Posterior cingulate gyrus (tissue), 11 donors: ENCODE measurements at regions of chr1 and their contacts with region 1.

Region 1: GRCh38 chr1:222643938-222644635 is 26.2 kb downstream of the MIA3 start:
- DNase-seq: peak; percentile 90 to 99 (median 95)

Region 2: DNA sequence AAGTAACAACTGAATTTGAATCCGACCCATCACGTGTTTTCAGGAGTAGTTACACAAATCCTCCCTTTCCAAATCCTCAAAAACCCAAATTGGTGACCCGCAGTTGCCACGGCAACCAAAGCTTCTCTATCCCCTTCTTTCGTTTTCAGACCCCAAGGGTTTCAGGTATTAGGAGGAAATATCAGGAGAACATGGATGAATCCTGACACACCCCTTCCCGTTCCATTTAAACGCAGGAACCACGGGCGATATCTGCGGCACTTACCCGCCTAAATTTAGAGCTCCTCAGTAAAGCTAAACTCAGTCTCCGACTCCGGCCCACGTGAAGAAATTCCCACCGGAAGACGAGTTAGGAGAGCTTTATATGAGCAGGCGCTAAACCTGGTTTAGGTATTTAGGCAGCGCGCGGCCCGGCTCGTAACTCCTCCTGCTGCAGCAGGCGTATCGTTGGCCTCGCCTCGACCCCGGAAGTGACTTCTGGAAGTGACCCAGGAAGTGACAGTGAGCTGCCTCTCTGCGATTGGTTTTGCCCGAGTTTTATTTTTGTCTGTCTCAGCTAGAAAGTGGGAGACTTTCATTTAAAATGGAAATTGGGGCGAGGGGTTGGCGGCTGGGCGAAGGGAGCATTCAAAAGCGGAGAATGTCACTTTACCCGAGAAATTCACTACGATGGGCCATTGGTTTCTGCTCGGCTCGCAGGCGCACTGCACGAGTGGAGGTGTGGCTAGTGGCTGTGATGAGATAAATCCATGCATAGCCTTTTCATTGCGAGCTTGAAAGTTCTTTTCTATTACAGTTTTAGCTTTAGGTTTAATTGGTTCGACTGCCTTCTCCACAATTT is 54.4 kb before region 1 on chr1 and contains the start of gene TAF1A:
- intact Hi-C with region 1: loop called (anchors 2 kb)
- DNase-seq: peak; percentile 77 to 97 (median 85)

Region 3: GRCh38 chr1:222629921-222630535 is 14.1 kb before region 1 on chr1:
- intact Hi-C with region 1: no loop called
- DNase-seq: no peak

Region 4: GRCh38 chr1:222704260-222704659 is 60.2 kb after region 1 on chr1:
- intact Hi-C with region 1: no loop called
- DNase-seq: no peak